ENCODE measurements at regions of chr16 and their contacts with region 1.

Region 1: DNA sequence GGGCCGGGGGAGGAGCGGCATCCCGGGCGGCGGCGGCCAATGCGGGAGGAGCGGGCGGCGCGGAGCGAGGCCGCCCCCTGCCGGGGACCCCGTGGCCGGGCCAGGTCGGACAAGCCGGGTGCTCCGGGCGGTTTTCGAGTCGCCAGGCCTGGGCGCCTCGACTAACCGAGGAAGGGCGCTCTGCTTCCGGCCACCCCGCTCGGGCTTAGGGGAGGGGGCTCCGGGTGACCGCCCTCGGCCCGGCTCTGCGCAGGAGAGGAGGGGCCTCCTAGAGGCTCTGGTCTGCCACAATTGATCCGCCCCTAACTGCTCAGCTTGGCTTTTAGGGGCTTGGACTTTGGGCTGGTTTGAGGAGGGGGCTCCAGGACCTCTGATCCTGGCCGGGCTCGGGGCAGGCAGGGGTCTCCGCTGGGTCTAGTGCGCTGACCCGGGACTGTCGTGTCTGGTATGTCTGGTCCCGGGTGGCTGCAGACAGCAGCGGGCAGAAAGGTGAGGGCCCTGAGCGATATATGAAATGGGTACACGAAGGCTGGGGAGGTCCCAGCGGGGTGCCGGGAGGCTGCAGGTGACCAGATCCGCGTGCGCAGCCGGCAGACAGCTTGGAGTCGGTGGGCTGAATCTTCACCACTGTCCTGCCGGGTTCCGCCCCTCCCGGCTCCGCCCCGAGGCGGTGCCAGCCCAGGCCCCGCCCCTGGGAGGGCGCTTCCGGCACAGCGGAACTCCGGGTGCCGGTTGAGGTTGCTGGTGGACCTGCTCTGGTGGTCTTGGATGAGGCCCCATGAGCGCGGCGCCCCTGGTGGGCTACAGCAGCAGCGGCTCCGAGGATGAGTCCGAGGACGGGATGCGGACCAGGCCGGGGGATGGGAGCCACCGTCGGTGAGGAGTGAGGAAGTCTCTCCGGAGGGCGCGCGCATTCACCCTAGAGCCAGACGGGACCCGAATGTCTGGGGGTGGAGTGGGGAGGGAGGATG is at the start of gene USB1:
- DNase-seq: peak; percentile 93
- ATAC-seq: peak; percentile 83
- H3K4me3 ChIP-seq: peak within 1 kb of the TSS; percentile 48 to 95 (median 88)
- H3K4me3 Mint-ChIP-seq: peak within 1 kb of the TSS; percentile 97
- H3K27ac ChIP-seq: peak within 1 kb of the TSS; percentile 86 to 87
- H3K27ac Mint-ChIP-seq: peak within 1 kb of the TSS; percentile 96
- H3K4me1 ChIP-seq: peaks cover 16 to 26% of the 10 kb centered on the region in 2 donors
- H3K4me1 Mint-ChIP-seq: peaks cover 34% of the 10 kb centered on the region
- H3K27me3 ChIP-seq: no peaks in the 10 kb centered on the region
- H3K27me3 Mint-ChIP-seq: no peaks in the 10 kb centered on the region
- CTCF ChIP-seq: peak; percentile 71
- total RNA-seq, gene USB1: 32.8 and 34.4 TPM in 2 replicates

Region 2: DNA sequence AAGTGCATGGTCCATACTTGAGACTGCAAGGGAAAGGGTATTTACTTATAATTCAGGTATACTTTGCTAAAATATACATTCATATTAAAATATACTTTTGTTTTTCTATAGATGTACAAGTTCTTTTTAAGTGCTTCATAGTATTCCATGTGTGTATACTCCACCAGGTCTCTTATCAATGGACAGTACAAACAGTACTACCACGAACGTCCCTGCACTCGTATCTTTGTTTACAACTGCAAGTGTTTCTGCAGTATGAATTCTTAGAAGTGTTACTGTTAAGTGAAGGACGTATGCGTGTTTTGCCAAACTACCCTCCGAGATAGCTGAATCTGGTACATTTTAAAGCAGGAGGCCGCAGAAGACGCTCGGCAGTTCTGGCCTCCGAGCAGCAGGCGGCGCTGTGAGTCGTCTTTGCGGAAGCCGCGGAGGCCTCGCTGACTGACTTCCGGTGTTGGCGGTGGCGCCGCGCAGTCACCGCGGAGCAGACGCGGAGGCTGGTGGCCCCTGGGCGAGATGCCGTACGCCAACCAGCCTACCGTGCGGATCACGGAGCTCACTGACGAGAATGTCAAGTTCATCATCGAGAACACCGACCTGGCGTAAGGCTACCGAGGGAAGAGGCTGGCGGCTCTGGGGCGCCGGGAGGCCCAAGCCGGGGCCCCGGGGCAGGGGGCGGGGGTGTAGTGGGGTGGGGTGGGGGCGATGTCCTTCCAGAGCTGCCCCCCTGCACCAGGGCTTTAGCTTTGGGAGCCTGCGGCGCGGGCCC is 538.6 kb before region 1 on chr16 and contains the start of gene POLR2C:
- CTCF ChIA-PET with region 1: no interaction called
- POLR2A ChIA-PET with region 1: no interaction called
- intact Hi-C with region 1: loop called (anchors 5 kb)
- DNase-seq: peak; percentile 93
- ATAC-seq: peak; percentile 98
- H3K4me3 ChIP-seq: peak within 1 kb of the TSS; percentile 59 to 88 (median 82)
- H3K4me3 Mint-ChIP-seq: peak within 1 kb of the TSS; percentile 100
- H3K27ac ChIP-seq: peak within 1 kb of the TSS; percentile 42 to 59
- H3K27ac Mint-ChIP-seq: peak within 1 kb of the TSS; percentile 99
- H3K4me1 ChIP-seq: peaks cover 12% of the 10 kb centered on the region in 2 donors
- H3K4me1 Mint-ChIP-seq: peaks cover 29% of the 10 kb centered on the region
- H3K27me3 ChIP-seq: no peaks in the 10 kb centered on the region
- H3K27me3 Mint-ChIP-seq: no peaks in the 10 kb centered on the region
- CTCF ChIP-seq: peak; percentile 95
- total RNA-seq, gene POLR2C: 57.8 and 61.6 TPM in 2 replicates

Region 3: GRCh38 chr16:57591086-57591869 is 409.7 kb before region 1 on chr16:
- CTCF ChIA-PET with region 1: interaction called, 8 read pairs
- POLR2A ChIA-PET with region 1: no interaction called
- intact Hi-C with region 1: loop called (anchors 1 kb)
- DNase-seq: peak; percentile 69
- ATAC-seq: peak; percentile 86
- H3K4me3 ChIP-seq: no peak overlapping the region
- H3K4me3 Mint-ChIP-seq: no peak overlapping the region
- H3K27ac ChIP-seq: no peak overlapping the region
- H3K27ac Mint-ChIP-seq: no peak overlapping the region
- H3K4me1 ChIP-seq: peaks cover 15 to 19% of the 10 kb centered on the region in 2 donors
- H3K4me1 Mint-ChIP-seq: peaks cover 21% of the 10 kb centered on the region
- H3K27me3 ChIP-seq: peaks cover 0 to 4% (median 0%) of the 10 kb centered on the region in 4 experiments
- H3K27me3 Mint-ChIP-seq: peaks cover 25% of the 10 kb centered on the region
- CTCF ChIP-seq: peak; percentile 85

Region 4: GRCh38 chr16:57899771-57900661 is 101.0 kb before region 1 on chr16:
- CTCF ChIA-PET with region 1: interaction called, 34 read pairs
- POLR2A ChIA-PET with region 1: no interaction called
- intact Hi-C with region 1: loop called (anchors 1 kb)
- DNase-seq: peak; percentile 74
- ATAC-seq: peak; percentile 36
- H3K4me3 ChIP-seq: no peak overlapping the region
- H3K4me3 Mint-ChIP-seq: no peak overlapping the region
- H3K27ac ChIP-seq: no peak overlapping the region
- H3K27ac Mint-ChIP-seq: no peak overlapping the region
- H3K4me1 ChIP-seq: no peaks in the 10 kb centered on the region
- H3K4me1 Mint-ChIP-seq: no peaks in the 10 kb centered on the region
- H3K27me3 ChIP-seq: peaks cover 0 to 19% (median 2%) of the 10 kb centered on the region in 4 experiments
- H3K27me3 Mint-ChIP-seq: peaks cover 29% of the 10 kb centered on the region
- CTCF ChIP-seq: peak; percentile 86

Region 5: GRCh38 chr16:58025351-58026138 is 24.6 kb after region 1 on chr16 and contains the start of gene MMP15:
- CTCF ChIA-PET with region 1: interaction called, 4 read pairs
- POLR2A ChIA-PET with region 1: interaction called, 3 read pairs
- intact Hi-C with region 1: loop called (anchors 2 kb)
- DNase-seq: peak; percentile 65
- ATAC-seq: peak; percentile 62
- H3K4me3 ChIP-seq: peak within 1 kb of the TSS; percentile 19 to 72 (median 58)
- H3K4me3 Mint-ChIP-seq: peak within 1 kb of the TSS; percentile 94
- H3K27ac ChIP-seq: no peak within 1 kb of the TSS
- H3K27ac Mint-ChIP-seq: peak within 1 kb of the TSS; percentile 83
- H3K4me1 ChIP-seq: peaks cover 21 to 26% of the 10 kb centered on the region in 2 donors
- H3K4me1 Mint-ChIP-seq: peaks cover 11% of the 10 kb centered on the region
- H3K27me3 ChIP-seq: peaks cover 0 to 44% (median 11%) of the 10 kb centered on the region in 4 experiments
- H3K27me3 Mint-ChIP-seq: peaks cover 28% of the 10 kb centered on the region
- CTCF ChIP-seq: no peak
- total RNA-seq, gene MMP15: not detected in 2 replicates

Region 6: GRCh38 chr16:58198022-58198683 is 197.2 kb after region 1 on chr16 and contains the start of gene CSNK2A2:
- CTCF ChIA-PET with region 1: no interaction called
- POLR2A ChIA-PET with region 1: no interaction called
- intact Hi-C with region 1: loop called (anchors 5 kb)
- DNase-seq: peak; percentile 82
- ATAC-seq: peak; percentile 93
- H3K4me3 ChIP-seq: peak within 1 kb of the TSS; percentile 44 to 83 (median 64)
- H3K4me3 Mint-ChIP-seq: peak within 1 kb of the TSS; percentile 90
- H3K27ac ChIP-seq: peak within 1 kb of the TSS in 1 of 2 donors; percentile 55
- H3K27ac Mint-ChIP-seq: peak within 1 kb of the TSS; percentile 81
- H3K4me1 ChIP-seq: peaks cover 15 to 18% of the 10 kb centered on the region in 2 donors
- H3K4me1 Mint-ChIP-seq: peaks cover 33% of the 10 kb centered on the region
- H3K27me3 ChIP-seq: peaks cover 0 to 7% (median 2%) of the 10 kb centered on the region in 4 experiments
- H3K27me3 Mint-ChIP-seq: peaks cover 10% of the 10 kb centered on the region
- CTCF ChIP-seq: no peak
- total RNA-seq, gene CSNK2A2: 63.5 and 69.4 TPM in 2 replicates

Region 7: GRCh38 chr16:58733671-58734458 is 732.9 kb after region 1 on chr16 and contains the start of gene GOT2:
- CTCF ChIA-PET with region 1: no interaction called
- POLR2A ChIA-PET with region 1: no interaction called
- intact Hi-C with region 1: loop called (anchors 10 kb)
- DNase-seq: peak; percentile 84
- ATAC-seq: peak; percentile 98
- H3K4me3 ChIP-seq: peak within 1 kb of the TSS; percentile 58 to 96 (median 66)
- H3K4me3 Mint-ChIP-seq: peak within 1 kb of the TSS; percentile 98
- H3K27ac ChIP-seq: peak within 1 kb of the TSS in 1 of 2 donors; percentile 79
- H3K27ac Mint-ChIP-seq: peak within 1 kb of the TSS; percentile 68
- H3K4me1 ChIP-seq: peaks cover 20 to 23% of the 10 kb centered on the region in 2 donors
- H3K4me1 Mint-ChIP-seq: peaks cover 42% of the 10 kb centered on the region
- H3K27me3 ChIP-seq: peaks cover 0 to under 1% (median 0%) of the 10 kb centered on the region in 4 experiments
- H3K27me3 Mint-ChIP-seq: peaks cover 1% of the 10 kb centered on the region
- CTCF ChIP-seq: peak; percentile 93
- total RNA-seq, gene GOT2: 31.2 and 33.6 TPM in 2 replicates